ENCODE measurements at regions of chr3 and their contacts with region 1.

Region 1: GRCh38 chr3:195894780-195895607 is 13.4 kb downstream of the TNK2 start:
- H3K4me3 ChIP-seq: peak overlapping the region; percentile 58
- H3K27ac ChIP-seq: peak overlapping the region; percentile 70; the same call in 1 of the 2 replicates
- H3K4me1 ChIP-seq: peaks cover 12% of the 10 kb centered on the region; the same call in 1 of the 2 replicates
- CTCF ChIP-seq: peak; percentile 78

Region 2: DNA sequence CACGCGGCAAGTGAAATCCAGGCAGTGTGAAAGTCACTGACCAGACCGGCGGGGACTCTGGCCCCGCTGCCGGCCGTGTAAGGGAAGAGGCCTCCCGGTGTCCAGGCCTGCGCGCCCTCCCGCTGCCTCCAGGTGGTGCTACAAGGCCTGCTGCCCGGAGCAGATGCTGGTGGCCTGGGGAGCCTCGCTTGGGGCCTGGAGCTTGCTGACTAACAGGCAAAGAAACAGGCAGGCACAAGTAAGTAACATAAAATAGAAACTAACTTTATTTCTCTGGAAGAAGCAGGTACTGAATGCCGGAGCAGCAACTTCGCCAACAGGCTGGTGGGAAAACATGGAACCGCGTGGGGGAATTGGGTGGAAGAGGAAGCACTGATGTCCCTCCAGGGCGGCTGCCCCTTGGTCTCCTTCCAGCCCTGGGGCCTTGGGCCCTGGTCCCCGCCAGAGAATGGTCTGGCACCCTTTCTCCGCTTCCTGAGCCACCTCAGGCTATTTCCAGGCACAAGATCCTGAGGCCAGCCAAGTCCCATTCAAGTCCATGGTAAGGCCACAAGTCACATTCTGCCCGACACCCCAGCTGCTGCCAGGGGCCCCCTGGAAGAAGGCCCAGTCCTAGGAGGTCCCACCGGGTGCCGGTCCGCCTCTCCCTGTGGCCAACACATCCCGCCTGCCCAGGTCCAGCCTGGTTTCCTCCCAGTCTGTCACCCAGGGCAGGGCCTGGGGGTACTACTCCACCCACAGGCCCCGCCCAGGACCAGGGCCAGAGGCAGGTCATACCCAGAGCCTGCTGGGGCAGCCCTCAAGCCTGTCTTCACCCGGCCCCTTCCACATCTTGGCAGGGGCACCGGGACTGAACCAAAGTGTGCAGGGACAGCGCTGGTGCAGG is 31.6 kb before region 1 on chr3:
- CTCF ChIA-PET with region 1: interaction called, 37 read pairs
- POLR2A ChIA-PET with region 1: no interaction called
- H3K4me3 ChIP-seq: no peak overlapping the region
- H3K27ac ChIP-seq: no peak overlapping the region
- H3K4me1 ChIP-seq: no peaks in the 10 kb centered on the region
- CTCF ChIP-seq: 0 out of 2 replicates have a peak, but pooled peaks have one; percentile 41

Region 3: DNA sequence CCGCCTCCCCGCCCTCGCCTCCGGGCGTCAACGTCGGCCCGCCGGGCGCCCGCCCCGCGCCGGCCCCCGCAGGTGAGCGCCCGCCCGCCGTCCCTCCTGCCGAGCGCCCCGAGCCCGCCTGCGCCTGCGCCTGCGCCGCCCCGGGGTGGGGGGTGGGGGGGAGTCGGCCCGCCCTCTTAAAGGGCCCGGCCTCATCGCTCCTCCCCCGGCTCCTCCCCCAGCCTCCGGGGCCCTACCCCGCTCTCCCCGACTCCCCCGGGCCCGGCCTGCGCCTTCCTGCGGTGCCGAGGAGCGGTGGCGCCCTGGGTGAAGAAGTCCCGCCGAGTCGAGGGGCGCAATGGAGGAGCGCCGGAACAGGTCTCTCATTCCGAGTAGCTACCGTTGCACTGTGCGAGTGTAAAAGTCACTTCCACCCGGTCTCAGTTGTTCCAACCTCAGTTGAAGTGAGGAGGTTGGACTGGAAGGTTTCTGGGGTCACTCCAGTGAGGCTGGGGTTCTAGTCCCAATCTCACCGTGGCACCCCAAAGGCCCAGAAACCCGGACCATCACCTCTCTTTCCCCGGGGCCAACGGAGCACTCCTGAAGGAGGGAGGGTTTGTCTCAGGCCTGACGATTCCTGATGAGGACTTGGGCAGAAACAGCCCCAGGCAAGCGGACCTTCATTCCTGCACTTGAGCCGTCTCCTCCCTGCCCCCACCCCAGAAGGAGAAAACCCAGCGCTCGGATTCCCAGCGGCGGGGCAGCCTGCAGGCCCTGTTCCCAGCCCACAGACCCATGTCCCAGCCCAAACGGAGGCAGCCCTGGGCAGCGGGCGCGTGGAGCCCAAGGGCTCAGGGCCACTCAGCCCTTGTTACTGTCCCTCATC is 14.9 kb after region 1 on chr3:
- CTCF ChIA-PET with region 1: interaction called, 30 read pairs
- POLR2A ChIA-PET with region 1: interaction called, 4 read pairs
- H3K4me3 ChIP-seq: peak overlapping the region; percentile 51
- H3K27ac ChIP-seq: peak overlapping the region; percentile 48; the same call in 1 of the 2 replicates
- H3K4me1 ChIP-seq: peaks cover 20% of the 10 kb centered on the region
- CTCF ChIP-seq: no peak